Astrocyte of the cerebellum (primary cell): ENCODE measurements at regions of chr5 and their contacts with region 1.

Region 1: GRCh38 chr5:88854769-88855168 is 28.2 kb downstream of the MEF2C start:
- DNase-seq: no peak
- H3K4me3 ChIP-seq: no peak overlapping the region
- CTCF ChIP-seq: no peak

Region 2: GRCh38 chr5:88785391-88786219 is 69.2 kb before region 1 on chr5:
- in situ Hi-C with region 1: loop called (anchors 5 kb)
- DNase-seq: peak; percentile 97
- H3K4me3 ChIP-seq: peak overlapping the region; percentile 26
- CTCF ChIP-seq: no peak